ENCODE measurements at regions of chr11 and their contacts with region 1.

Region 1: GRCh38 chr11:43810929-43811596 is 69.6 kb upstream of the ALKBH3 start:
- DNase-seq: peak; percentile 34
- ATAC-seq: peak; percentile 35; the same call in 1 of the 2 replicates
- H3K4me3 ChIP-seq: no peak overlapping the region
- H3K27ac ChIP-seq: no peak overlapping the region
- H3K4me1 ChIP-seq: no peaks in the 10 kb centered on the region
- H3K27me3 ChIP-seq: no peaks in the 10 kb centered on the region
- CTCF ChIP-seq: peak; percentile 64

Region 2: DNA sequence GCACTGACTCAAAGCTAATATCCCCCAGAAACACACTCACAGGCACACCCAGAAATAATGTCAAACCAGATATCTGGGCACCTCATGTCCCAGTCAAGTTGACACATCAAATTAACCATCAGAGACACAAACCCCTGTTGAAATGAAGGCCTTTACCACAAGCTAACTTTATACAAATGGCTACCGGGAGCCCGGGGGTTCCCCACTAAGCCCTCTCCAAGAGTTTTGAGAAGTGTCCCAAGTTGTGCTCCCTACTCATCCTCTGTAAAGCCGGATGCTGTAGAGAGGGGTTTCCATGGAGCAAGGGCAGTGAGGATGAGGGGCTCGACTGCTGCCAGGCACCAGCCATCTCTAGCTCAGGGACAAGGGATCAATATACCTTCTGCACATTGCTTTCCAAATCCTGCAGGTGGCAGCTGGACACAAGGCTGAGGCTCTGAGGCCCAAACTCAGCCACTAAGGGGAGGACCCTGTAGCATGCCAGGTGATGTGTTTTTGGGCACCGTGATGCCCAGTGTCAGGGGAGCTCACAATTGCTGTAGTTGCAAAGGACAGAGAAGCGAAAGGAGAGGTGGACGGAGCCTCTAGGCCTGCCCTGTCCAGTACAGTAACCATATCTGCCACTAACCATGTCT is 306.6 kb before region 1 on chr11:
- CTCF ChIA-PET with region 1: no interaction called
- POLR2A ChIA-PET with region 1: no interaction called
- intact Hi-C with region 1: loop called (anchors 1 kb)
- DNase-seq: peak; percentile 53
- ATAC-seq: peak; percentile 89
- H3K4me3 ChIP-seq: no peak overlapping the region
- H3K27ac ChIP-seq: no peak overlapping the region
- H3K4me1 ChIP-seq: no peaks in the 10 kb centered on the region; the same call in 1 of the 2 replicates
- H3K27me3 ChIP-seq: 0 out of 2 replicates have a peak, but pooled peaks cover 3% of the 10 kb centered on the region
- CTCF ChIP-seq: peak; percentile 62

Region 3: GRCh38 chr11:43567396-43567975 is 243.6 kb before region 1 on chr11:
- CTCF ChIA-PET with region 1: no interaction called
- POLR2A ChIA-PET with region 1: no interaction called
- intact Hi-C with region 1: loop called (anchors 5 kb)
- DNase-seq: peak; percentile 63
- ATAC-seq: peak; percentile 60
- H3K4me3 ChIP-seq: no peak overlapping the region
- H3K27ac ChIP-seq: no peak overlapping the region
- H3K4me1 ChIP-seq: no peaks in the 10 kb centered on the region
- H3K27me3 ChIP-seq: peaks cover 53% of the 10 kb centered on the region
- CTCF ChIP-seq: peak; percentile 72

Region 4: GRCh38 chr11:43643898-43644620 is 167.0 kb before region 1 on chr11:
- CTCF ChIA-PET with region 1: no interaction called
- POLR2A ChIA-PET with region 1: no interaction called
- intact Hi-C with region 1: loop called (anchors 5 kb)
- DNase-seq: peak; percentile 74
- ATAC-seq: peak; percentile 99
- H3K4me3 ChIP-seq: peak overlapping the region; percentile 94
- H3K27ac ChIP-seq: peak overlapping the region; percentile 14; the same call in 1 of the 2 replicates
- H3K4me1 ChIP-seq: peaks cover 15% of the 10 kb centered on the region
- H3K27me3 ChIP-seq: peaks cover 25% of the 10 kb centered on the region
- CTCF ChIP-seq: no peak

Region 5: GRCh38 chr11:43979571-43980190 is 168.6 kb after region 1 on chr11:
- CTCF ChIA-PET with region 1: no interaction called
- POLR2A ChIA-PET with region 1: no interaction called
- intact Hi-C with region 1: no loop called
- DNase-seq: no peak
- ATAC-seq: no peak
- H3K4me3 ChIP-seq: no peak overlapping the region
- H3K27ac ChIP-seq: no peak overlapping the region
- H3K4me1 ChIP-seq: peaks cover 23% of the 10 kb centered on the region
- H3K27me3 ChIP-seq: no peaks in the 10 kb centered on the region
- CTCF ChIP-seq: no peak

Measured in PC-3 (cell line).